Natural killer cell (primary cell): ENCODE measurements at regions of chr16 and their contacts with region 1.

Region 1: DNA sequence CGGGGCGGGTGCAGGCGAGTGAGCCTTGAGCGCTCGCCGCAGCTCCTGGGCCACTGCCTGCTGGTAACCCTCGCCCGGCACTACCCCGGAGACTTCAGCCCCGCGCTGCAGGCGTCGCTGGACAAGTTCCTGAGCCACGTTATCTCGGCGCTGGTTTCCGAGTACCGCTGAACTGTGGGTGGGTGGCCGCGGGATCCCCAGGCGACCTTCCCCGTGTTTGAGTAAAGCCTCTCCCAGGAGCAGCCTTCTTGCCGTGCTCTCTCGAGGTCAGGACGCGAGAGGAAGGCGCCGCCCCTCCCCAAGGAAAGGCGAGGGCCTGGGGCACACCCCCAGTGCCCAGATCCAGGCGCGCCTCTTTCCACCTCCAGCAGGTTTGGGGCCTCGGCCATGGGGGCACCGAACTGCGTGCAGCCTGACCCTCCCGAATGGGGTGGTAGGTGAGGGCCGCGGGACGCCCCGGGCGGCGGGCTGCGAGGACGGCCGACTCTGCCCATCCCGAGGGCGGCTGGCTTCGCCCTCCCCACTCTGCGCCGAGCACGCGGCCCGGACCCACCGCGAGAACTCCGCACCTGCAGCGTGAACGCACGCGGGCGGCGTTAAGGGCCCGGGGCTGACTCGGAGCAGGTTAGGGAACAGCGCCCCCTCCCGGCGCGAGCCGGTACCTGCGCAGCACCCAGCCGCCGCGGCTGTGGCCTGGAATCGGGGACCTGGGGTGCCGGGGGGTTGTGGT is 844 bp downstream of the HBQ1 start:
- DNase-seq: peak; percentile 85 to 91
- ATAC-seq: peak; percentile 90 to 95 (median 90)
- H3K4me3 ChIP-seq: peak overlapping the region; percentile 36
- H3K4me3 Mint-ChIP-seq: peak overlapping the region; percentile 63
- H3K27ac ChIP-seq: no peak overlapping the region
- H3K27ac Mint-ChIP-seq: no peak overlapping the region
- H3K4me1 ChIP-seq: peaks cover 19% of the 10 kb centered on the region
- H3K4me1 Mint-ChIP-seq: no peaks in the 10 kb centered on the region
- H3K27me3 ChIP-seq: peaks cover 24% of the 10 kb centered on the region
- H3K27me3 Mint-ChIP-seq: peaks cover 10 to 11% of the 10 kb centered on the region in 2 donors
- CTCF ChIP-seq: peak; percentile 91

Region 2: DNA sequence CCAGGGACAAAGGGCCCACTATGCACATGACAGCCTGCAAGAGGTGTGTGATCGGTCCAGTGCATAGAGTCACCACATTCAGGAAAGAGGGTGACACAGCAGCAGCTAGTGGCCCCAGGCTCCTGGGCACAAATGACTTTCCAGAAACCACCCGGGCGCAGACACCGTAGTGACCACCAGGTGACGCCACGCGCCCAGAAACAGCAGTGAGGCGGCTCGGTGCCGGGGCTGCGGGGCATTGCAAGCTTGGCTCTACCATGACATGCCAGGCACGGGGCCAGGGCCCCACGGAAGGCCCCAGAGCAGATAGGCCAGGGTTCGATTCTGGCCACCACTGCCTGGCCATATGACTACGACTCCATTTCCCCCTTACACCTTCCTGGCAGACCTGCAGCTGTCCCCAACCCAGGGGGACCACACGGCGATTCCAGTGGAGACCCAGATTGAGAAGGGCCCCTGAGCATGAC is 115.4 kb before region 1 on chr16:
- intact Hi-C with region 1: loop called (anchors 1 kb)
- DNase-seq: peak; percentile 85 to 88
- ATAC-seq: peak; percentile 84 to 100 (median 97)
- H3K4me3 ChIP-seq: no peak overlapping the region
- H3K4me3 Mint-ChIP-seq: no peak overlapping the region
- H3K27ac ChIP-seq: no peak overlapping the region
- H3K27ac Mint-ChIP-seq: no peak overlapping the region
- H3K4me1 ChIP-seq: peaks cover 4% of the 10 kb centered on the region
- H3K4me1 Mint-ChIP-seq: peaks cover 0 to 6% of the 10 kb centered on the region in 2 donors
- H3K27me3 ChIP-seq: no peaks in the 10 kb centered on the region
- H3K27me3 Mint-ChIP-seq: peaks cover 0 to 2% of the 10 kb centered on the region in 2 donors
- CTCF ChIP-seq: peak; percentile 94

Region 3: DNA sequence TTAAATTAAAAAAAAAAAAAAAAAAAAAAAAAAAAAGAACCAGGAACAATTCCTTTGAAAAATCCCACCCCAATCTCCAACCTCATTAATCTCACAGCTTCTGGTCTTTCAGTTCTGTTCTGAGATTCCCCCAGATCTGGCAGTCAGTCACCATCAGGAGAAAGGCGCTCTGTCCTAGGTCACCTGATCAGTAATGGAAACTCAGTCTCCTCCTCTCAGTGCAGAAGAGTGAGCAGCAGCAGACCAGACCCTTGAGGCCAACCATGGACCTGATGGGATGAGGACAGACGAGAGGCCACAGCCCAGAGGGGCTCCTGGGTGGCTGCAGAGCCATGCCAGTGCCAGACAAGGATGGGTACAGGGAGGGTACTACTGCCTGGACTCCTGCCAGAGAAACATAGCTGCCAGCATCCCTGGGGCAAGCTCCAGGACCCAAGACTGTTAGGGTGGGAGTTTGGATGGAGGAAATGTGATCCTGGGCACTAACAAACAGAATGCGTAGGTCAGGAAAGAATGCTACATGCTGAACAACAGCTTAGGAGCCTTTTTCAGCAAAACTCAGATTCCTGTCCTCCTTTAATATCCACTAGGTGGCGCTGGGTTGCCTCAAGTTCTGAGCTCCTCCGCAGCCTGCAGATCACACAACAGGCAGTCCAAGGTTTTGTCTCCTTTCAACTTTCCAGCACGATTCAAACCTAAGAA is 74.3 kb before region 1 on chr16:
- intact Hi-C with region 1: loop called (anchors 1 kb)
- DNase-seq: peak; percentile 42 to 85
- ATAC-seq: peak; percentile 81 to 94 (median 86)
- H3K4me3 ChIP-seq: no peak overlapping the region
- H3K4me3 Mint-ChIP-seq: no peak overlapping the region
- H3K27ac ChIP-seq: no peak overlapping the region
- H3K27ac Mint-ChIP-seq: no peak overlapping the region
- H3K4me1 ChIP-seq: no peaks in the 10 kb centered on the region
- H3K4me1 Mint-ChIP-seq: peaks cover 0 to 7% of the 10 kb centered on the region in 2 donors
- H3K27me3 ChIP-seq: no peaks in the 10 kb centered on the region
- H3K27me3 Mint-ChIP-seq: no peaks in the 10 kb centered on the region
- CTCF ChIP-seq: peak; percentile 72

Region 4: GRCh38 chr16:117379-118365 is 63.4 kb before region 1 on chr16:
- intact Hi-C with region 1: loop called (anchors 1 kb)
- DNase-seq: peak; percentile 56 to 83
- ATAC-seq: peak; percentile 64 to 95 (median 86)
- H3K4me3 ChIP-seq: no peak overlapping the region
- H3K4me3 Mint-ChIP-seq: no peak overlapping the region
- H3K27ac ChIP-seq: no peak overlapping the region
- H3K27ac Mint-ChIP-seq: no peak overlapping the region
- H3K4me1 ChIP-seq: peaks cover 18% of the 10 kb centered on the region
- H3K4me1 Mint-ChIP-seq: peaks cover 11% of the 10 kb centered on the region in 2 donors
- H3K27me3 ChIP-seq: no peaks in the 10 kb centered on the region
- H3K27me3 Mint-ChIP-seq: no peaks in the 10 kb centered on the region
- CTCF ChIP-seq: peak; percentile 91

Region 5: GRCh38 chr16:425082-425718 is 244.1 kb after region 1 on chr16 and contains the start of gene RAB11FIP3:
- intact Hi-C with region 1: no loop called
- DNase-seq: peak; percentile 84 to 89
- ATAC-seq: peak; percentile 86 to 93 (median 87)
- H3K4me3 ChIP-seq: peak within 1 kb of the TSS; percentile 84
- H3K4me3 Mint-ChIP-seq: peak within 1 kb of the TSS; percentile 92
- H3K27ac ChIP-seq: peak within 1 kb of the TSS; percentile 97
- H3K27ac Mint-ChIP-seq: peak within 1 kb of the TSS; percentile 89 to 91
- H3K4me1 ChIP-seq: peaks cover 24% of the 10 kb centered on the region
- H3K4me1 Mint-ChIP-seq: peaks cover 28 to 35% of the 10 kb centered on the region in 2 donors
- H3K27me3 ChIP-seq: no peaks in the 10 kb centered on the region
- H3K27me3 Mint-ChIP-seq: peaks cover 0 to 3% of the 10 kb centered on the region in 2 donors
- CTCF ChIP-seq: peak; percentile 17
- total RNA-seq, gene RAB11FIP3: 51.0 to 61.2 (median 55.3) TPM

Region 6: GRCh38 chr16:502179-502943 is 321.3 kb after region 1 on chr16:
- intact Hi-C with region 1: no loop called
- DNase-seq: no peak
- ATAC-seq: peak in 1 of 3 donors; percentile 49
- H3K4me3 ChIP-seq: no peak overlapping the region
- H3K4me3 Mint-ChIP-seq: no peak overlapping the region
- H3K27ac ChIP-seq: no peak overlapping the region
- H3K27ac Mint-ChIP-seq: no peak overlapping the region
- H3K4me1 ChIP-seq: peaks cover 3% of the 10 kb centered on the region
- H3K4me1 Mint-ChIP-seq: peaks cover 0 to 9% of the 10 kb centered on the region in 2 donors
- H3K27me3 ChIP-seq: no peaks in the 10 kb centered on the region
- H3K27me3 Mint-ChIP-seq: no peaks in the 10 kb centered on the region
- CTCF ChIP-seq: no peak